Prostate gland (tissue), 2 donors: ENCODE measurements at regions of chr6 and their contacts with region 1.

Region 1: DNA sequence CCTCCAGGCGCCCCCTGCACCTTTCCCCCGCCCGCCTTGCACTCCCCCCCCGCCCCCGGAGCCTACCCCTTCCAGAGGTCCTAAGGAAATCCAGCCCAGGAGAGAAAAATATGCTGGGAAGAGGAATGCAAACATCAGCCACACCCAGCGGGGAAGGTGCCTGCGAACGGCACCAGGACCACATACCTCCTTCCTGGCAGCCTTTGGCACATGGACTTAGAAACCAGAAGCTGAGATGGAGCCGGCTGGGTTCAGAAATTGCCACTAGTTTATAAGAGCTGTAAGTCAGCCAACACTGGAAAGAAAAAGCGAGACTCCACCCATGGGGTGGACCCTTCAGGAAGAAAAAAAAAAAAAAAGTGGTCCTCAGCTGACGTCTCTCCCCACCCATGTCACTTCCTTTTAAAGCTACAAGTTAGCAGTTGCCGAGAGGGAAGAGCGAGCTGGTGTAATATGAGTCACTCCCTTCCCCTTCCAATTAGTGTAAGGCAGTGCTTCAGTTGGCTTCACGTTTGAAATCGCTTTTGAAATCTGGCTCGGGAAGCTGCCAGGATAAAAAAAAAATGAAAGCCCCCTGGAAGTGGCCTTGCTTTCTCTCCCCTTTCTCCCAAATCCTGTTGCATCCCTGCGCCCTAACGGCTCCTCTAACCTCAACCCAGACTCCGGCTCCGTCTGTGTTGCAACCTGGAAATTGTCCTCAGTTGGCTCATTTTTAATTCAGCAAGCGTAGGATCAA is at the start of gene AGPAT4:
- DNase-seq: peak; percentile 57
- H3K4me3 ChIP-seq: peak within 1 kb of the TSS; percentile 36 to 39
- H3K27ac ChIP-seq: peak within 1 kb of the TSS; percentile 52 to 63
- H3K4me1 ChIP-seq: no peaks in the 10 kb centered on the region
- H3K27me3 ChIP-seq: peaks cover 2% of the 10 kb centered on the region
- CTCF ChIP-seq: no peak
- POLR2A ChIP-seq: peak; percentile 48
- total RNA-seq, gene AGPAT4: 1.7 to 4.2 TPM

Region 2: DNA sequence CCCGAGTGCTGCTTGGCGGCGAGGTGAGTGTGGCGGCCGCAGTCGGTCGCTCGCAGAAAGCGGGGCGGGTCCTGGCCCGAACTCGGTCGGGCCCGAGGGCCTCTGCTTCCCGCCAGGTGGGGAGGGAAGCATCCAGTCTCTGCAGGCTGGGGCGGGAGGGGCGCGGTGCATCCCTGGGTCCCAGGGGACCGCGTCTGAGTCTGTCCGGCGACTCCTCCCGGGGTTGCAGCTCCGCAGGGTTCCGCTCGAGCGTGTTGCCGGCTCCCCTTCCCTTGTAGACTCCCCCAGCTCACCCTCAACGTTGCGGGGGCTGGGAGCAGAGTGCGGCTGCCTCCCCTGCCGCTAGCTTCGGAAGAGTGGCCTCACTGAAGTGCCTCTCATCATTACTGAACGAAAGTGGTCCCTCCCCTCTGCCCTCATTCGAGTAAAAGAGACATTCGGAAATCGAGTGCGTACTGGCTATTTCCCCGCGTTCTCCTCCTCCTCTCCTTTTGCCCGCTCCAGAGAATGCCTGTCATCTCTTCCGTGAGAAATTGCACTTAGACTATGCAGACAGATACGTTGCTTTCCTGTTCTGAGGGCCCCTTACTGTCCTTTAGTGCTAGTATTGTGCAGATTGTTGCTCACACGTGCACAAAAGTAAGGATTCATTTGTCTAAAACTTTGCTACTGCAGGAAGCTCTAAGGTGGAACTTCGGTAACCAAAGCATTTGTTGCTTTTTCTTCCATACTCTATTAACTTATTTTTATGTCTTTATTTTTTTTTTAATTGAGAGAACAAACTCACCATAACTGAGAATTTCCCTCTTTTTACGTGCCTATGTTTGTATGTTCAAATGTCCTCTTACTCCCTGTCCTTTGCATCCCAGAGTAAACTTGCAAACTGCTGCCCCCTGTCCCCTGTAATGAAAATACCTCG is 281.6 kb before region 1 on chr6:
- intact Hi-C with region 1: loop called (anchors 10 kb)
- DNase-seq: peak; percentile 67
- H3K4me3 ChIP-seq: peak overlapping the region; percentile 95
- H3K27ac ChIP-seq: peak overlapping the region; percentile 96 to 97
- H3K4me1 ChIP-seq: peaks cover 3% of the 10 kb centered on the region
- H3K27me3 ChIP-seq: no peaks in the 10 kb centered on the region
- CTCF ChIP-seq: peak in 3 of 4 experiments; percentile 41 to 59 (median 54)
- POLR2A ChIP-seq: no peak

Region 3: DNA sequence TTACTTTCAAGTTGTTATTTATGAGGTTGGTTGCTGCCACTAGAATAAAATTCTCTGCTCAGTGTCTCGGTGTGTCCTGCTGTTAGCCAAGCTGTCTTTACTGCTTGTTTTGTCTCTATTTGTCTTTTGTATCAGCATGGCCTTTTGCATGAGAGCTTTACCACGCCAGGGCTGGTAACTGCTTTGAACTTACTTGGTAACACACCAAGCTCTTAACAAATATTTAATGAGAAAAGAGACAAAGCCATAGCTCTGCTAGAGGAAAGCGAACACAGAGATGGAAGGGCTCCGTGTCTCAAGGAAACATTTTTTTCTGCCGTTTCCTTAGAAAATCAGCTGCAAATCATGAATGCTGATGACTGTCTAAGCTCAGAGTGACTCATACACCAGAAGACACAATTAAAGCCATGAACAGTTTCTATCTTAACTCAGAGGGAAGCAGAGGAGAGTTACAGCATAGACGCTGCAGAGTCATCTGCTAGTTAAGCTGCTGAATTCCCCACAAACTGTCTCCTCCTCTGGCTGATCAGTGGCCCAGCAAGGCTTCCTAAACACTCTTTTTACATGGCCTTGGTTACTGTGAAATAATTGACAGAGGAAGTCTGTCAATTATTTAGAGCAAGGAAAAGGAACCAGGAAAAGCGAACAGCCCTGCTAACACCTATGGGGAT is 44.9 kb before region 1 on chr6:
- intact Hi-C with region 1: loop called (anchors 5 kb)
- DNase-seq: no peak
- H3K4me3 ChIP-seq: no peak overlapping the region
- H3K27ac ChIP-seq: peak overlapping the region; percentile 57 to 60
- H3K4me1 ChIP-seq: peaks cover 10% of the 10 kb centered on the region
- H3K27me3 ChIP-seq: no peaks in the 10 kb centered on the region
- CTCF ChIP-seq: no peak
- POLR2A ChIP-seq: no peak